Motor neuron (in vitro differentiated cells): ENCODE measurements at regions of chr16 and their contacts with region 1.

Region 1: DNA sequence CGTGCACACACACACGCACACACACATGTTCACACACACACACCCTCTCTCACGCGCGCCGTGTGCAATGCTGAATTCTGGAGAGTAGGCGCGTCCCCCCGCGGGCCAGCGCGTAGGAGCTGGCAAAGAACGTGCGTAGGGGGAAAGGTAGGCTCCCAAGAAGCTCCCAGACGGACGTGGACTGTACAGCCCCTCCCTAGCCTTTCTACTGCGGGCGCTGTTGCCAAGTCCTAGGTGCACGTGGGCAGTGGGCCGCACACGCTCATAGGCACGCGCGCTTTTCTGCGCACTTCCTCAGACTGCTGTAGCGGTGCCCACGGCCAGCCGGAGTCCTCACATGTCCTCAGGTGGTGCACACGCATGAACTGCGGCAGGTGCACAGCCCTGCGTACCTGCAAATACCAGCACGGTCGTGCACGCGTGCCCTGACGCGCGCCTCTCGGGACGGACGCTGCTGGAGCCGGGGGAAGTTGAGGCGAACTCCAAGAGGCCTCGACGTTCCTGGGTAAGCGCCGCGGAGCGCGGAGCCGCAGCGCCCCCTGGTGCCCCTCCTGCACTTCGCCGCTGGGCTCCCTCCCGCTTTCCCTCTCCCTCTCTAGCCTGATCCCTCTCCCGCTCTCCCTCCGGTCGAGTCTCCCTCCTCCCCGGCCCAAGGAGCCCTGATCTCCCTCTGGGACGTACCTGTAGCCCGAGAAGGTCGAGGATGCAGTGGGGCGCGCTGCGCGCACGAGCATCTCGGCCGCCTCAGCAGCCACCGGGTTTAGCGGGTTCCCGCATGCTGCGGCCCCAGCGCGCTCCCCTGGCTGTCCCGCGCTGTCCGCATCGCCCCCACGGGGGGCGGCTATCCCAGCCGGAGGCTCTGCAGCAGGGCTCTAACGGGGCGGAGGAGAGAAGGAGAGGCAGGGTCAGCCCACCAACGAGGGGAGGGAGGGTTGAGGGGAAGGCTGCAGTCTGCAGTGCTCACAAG is 749 bp downstream of the GRIN2A start:
- ATAC-seq: peak; percentile 69 to 90 (median 72)
- H3K4me3 ChIP-seq: peak overlapping the region; percentile 47 to 55 (median 49)
- H3K27ac ChIP-seq: no peak overlapping the region
- H3K4me1 ChIP-seq: peaks cover 6 to 18% of the 10 kb centered on the region in 2 donors

Region 2: DNA sequence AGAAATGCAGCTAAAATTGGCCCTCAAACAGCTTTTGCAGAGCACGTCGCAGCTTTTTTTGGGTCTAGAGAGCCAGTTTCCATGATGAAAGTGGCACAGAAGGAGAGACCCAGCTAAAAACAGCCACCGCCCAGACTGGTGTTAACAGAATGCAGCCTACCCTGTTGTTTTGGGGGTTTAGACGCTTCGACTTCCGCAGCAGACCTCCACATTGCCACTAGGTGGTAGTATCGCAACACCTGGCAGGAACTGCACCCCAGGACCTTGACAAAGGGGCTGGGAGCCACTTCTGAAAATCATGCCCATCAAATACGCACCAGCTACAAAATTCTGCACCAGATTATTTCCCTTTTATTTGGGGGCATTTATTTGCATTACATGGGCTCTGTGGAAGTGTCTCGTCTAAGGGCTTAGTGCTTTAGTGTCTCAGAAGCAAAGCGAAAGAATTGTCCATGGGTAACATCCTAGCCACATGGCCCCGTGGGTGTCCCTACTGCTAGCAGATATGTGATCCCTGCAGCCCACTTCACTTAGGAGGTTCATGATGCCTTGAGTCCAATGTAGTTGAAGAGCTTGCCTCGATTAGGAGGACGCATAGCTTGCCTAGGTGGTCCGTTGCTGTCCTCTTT is 922.9 kb before region 1 on chr16:
- in situ Hi-C with region 1: loop called in 2 of 9 experiments (anchors 5 to 25 kb)
- ATAC-seq: peak in 7 of 8 experiments; percentile 32 to 85 (median 79)
- H3K4me3 ChIP-seq: no peak overlapping the region
- H3K27ac ChIP-seq: no peak overlapping the region
- H3K4me1 ChIP-seq: peaks cover 7 to 12% of the 10 kb centered on the region in 2 donors

Region 3: GRCh38 chr16:10067406-10067805 is 114.1 kb before region 1 on chr16:
- in situ Hi-C with region 1: no loop called
- ATAC-seq: no peak
- H3K4me3 ChIP-seq: no peak overlapping the region
- H3K27ac ChIP-seq: no peak overlapping the region
- H3K4me1 ChIP-seq: peaks cover 4 to 6% of the 10 kb centered on the region in 2 donors